Right ventricle myocardium superior (tissue), 1 donor: ENCODE measurements at regions of chr2 and their contacts with region 1.

Region 1: GRCh38 chr2:189466660-189467059 is 25.4 kb downstream of the WDR75 start:
- DNase-seq: no peak
- ATAC-seq: peak; percentile 77

Region 2: GRCh38 chr2:188878716-188879115 is 587.9 kb before region 1 on chr2:
- intact Hi-C with region 1: no loop called
- DNase-seq: no peak
- ATAC-seq: no peak

Region 3: GRCh38 chr2:189363559-189363958 is 103.1 kb before region 1 on chr2:
- intact Hi-C with region 1: no loop called
- DNase-seq: no peak
- ATAC-seq: no peak

Region 4: DNA sequence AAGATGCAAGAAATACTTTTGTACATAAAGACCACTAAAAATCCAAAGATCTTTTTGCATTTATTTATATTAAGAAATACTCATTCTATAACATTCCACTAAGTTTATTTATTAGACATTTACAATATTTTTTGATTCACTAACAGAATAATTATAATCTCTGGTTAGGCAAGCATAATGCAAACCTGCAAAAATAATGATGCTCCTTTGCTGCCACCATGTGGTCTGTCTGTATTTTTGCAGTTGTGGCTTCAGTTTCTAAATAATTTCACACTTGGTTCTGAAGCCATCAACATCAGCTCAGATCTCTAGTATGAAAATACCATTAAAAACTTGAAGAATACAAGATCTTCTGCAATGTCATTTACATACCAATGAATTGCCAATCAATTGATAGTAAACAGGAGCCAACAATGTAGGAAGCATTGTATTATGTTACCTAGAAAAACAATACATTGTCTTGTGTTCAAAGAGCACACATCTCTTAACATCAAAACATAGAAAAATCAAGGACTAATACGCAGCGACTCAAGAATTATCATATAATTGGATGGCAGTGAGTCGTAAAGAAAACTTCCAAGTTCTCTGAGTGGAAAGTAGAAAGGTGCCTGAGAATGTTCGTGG is 54.2 kb before region 1 on chr2:
- intact Hi-C with region 1: no loop called
- DNase-seq: no peak
- ATAC-seq: peak; percentile 85

Region 5: DNA sequence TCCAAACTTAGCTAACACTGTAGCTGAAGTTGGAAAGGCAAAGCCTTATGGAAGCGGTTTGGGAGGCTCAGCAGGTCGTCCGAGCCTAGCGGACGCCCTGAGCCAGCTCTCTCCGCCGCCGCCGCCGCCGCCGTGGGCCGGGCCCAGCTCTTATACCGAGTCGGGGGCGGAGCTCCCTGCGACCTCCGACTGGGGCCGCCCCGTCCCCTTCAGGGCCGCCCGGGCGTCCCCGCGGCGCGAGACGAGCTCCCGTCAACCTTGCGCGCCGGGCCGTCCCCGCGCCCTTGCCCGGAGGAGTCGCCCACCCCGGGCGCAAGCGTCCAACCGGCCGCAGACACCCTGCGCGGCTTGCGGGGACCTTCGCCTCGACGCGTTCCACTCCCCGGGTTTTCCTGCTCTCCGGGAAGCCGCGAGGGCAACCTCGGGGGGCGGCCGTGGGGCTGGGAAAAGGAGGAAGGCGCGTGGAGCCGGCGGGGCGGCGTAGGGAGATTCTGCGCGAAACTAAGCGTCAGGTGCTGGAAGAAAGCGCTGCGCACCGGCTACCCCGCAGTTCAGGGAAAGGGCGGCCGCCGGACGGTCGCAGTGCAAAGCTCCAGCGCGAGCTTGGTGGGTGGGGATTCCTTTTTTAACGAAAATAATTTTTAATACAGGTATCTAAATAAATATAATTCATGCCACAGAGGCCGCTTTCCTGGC is 114.1 kb after region 1 on chr2 and contains the start of gene SLC40A1:
- intact Hi-C with region 1: loop called (anchors 10 kb)
- DNase-seq: peak; percentile 90
- ATAC-seq: peak; percentile 98
- total RNA-seq, gene SLC40A1: 48.2 TPM

Region 6: DNA sequence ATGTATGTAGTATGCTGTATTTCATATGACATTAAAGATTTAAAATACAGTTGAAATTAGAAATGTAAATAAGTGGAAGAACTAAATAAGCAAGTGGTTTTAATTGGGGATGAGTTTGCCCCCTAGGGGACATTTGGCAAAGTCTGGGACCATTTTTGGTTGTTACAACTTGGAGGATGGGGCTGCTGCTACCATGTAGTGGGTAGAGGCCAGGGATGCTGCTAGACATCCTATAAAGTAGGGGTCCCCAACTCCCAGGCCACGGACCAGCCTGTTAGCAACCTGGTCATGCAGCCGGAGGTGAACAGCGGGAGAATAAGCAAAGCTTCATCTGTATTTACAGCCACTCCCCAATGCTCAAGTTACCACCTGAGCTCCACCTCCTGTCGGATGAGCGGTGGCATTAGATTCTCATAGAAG is 166.7 kb after region 1 on chr2:
- intact Hi-C with region 1: loop called (anchors 2 kb)
- DNase-seq: no peak
- ATAC-seq: peak; percentile 45